ENCODE measurements at regions of chr5 and their contacts with region 1.

Region 1: DNA sequence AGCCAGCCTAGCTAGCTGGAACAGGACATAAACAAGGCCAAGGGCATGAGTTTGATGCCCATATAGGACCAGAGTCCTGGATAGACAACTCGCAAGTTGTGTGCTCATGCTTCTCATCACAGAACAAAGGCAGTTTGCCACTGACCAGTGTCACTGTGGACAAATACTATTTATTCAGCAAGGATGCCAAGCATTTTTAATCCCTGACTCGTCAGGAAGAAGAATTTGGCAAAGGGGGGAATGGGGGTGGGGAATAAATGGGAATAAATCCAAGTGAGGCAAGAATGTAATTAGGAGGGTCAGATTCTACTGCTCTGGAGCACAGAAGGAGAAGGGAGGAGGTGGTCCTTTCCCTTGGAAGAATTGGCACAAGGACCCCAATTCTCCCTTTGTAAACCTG is 46.8 kb upstream of the ANKRD55 start:
- DNase-seq: peak; percentile 80
- H3K4me3 ChIP-seq: no peak overlapping the region
- H3K27ac ChIP-seq: peak overlapping the region; percentile 92
- H3K4me1 ChIP-seq: peaks cover 45% of the 10 kb centered on the region
- H3K27me3 ChIP-seq: no peaks in the 10 kb centered on the region
- CTCF ChIP-seq: no peak
- POLR2A ChIP-seq: no peak

Region 2: GRCh38 chr5:56088967-56089829 is 190.8 kb before region 1 on chr5:
- CTCF ChIA-PET with region 1: no interaction called
- POLR2A ChIA-PET with region 1: no interaction called
- dilution Hi-C with region 1: no loop called
- intact Hi-C with region 1: no loop called
- DNase-seq: no peak
- H3K4me3 ChIP-seq: no peak overlapping the region
- H3K27ac ChIP-seq: no peak overlapping the region
- H3K4me1 ChIP-seq: peaks cover 15% of the 10 kb centered on the region
- H3K27me3 ChIP-seq: no peaks in the 10 kb centered on the region
- CTCF ChIP-seq: no peak
- POLR2A ChIP-seq: no peak

Region 3: GRCh38 chr5:56481428-56482357 is 201.7 kb after region 1 on chr5:
- CTCF ChIA-PET with region 1: no interaction called
- POLR2A ChIA-PET with region 1: no interaction called
- dilution Hi-C with region 1: no loop called
- intact Hi-C with region 1: loop called (anchors 2 kb)
- DNase-seq: peak; percentile 53
- H3K4me3 ChIP-seq: peak overlapping the region; percentile 44 to 88 (median 87)
- H3K27ac ChIP-seq: peak overlapping the region; percentile 32
- H3K4me1 ChIP-seq: peaks cover 12% of the 10 kb centered on the region
- H3K27me3 ChIP-seq: no peaks in the 10 kb centered on the region
- CTCF ChIP-seq: peak; percentile 16 to 63
- POLR2A ChIP-seq: no peak

Measured in endothelial cell of umbilical vein (primary cell).